ENCODE measurements at regions of chr3 and their contacts with region 1.

Region 1: DNA sequence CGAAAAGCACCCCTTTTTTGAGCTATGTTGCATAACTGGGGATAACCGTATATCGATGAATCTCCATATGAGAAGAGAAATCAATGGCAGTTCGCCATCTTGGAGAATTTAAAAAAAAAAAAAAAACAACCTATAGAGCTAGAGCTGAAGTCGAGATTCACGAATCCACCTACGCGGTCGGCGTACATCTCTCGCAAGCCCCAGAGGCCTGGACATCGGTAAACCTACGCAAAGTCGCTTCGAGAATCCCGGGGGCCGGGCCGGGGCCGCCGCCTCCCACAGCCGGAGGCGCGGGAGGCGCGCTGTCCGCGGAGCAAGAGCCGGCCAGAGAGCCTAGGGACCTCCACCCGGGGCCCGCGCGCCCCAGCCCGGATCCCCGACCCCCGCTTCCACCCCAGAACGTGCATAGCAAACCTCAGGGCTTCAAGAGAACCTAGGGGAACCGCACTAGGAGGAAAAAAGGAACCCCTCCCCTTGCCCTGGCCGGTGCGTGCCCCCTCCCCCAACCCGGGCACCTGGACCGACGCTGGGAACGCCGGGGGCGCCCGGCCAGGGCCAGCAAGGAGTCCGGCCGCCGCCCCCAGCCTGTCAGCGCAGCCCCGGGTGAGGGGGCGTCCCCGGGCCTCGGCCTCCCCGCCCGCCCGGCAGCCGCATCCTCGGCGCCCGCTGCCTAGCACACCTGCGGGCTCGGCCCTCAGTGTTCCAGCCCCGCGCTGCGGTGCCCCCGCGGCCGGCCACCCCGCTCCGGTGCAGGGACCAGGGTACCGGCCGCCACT is 567 bp downstream of the PFN2 start:
- DNase-seq: peak; percentile 66 to 90 (median 74)
- ATAC-seq: peak; percentile 55
- H3K4me3 ChIP-seq: peak overlapping the region; percentile 53
- H3K4me3 Mint-ChIP-seq: peak overlapping the region; percentile 94
- H3K27ac ChIP-seq: no peak overlapping the region
- H3K27ac Mint-ChIP-seq: peak overlapping the region; percentile 57
- H3K4me1 ChIP-seq: peaks cover 13% of the 10 kb centered on the region
- H3K4me1 Mint-ChIP-seq: peaks cover 27% of the 10 kb centered on the region
- H3K27me3 ChIP-seq: peaks cover 3 to 20% of the 10 kb centered on the region in 2 experiments
- H3K27me3 Mint-ChIP-seq: peaks cover 36% of the 10 kb centered on the region
- CTCF ChIP-seq: no peak

Region 2: GRCh38 chr3:149902498-149903139 is 67.5 kb before region 1 on chr3:
- CTCF ChIA-PET with region 1: no interaction called
- POLR2A ChIA-PET with region 1: no interaction called
- intact Hi-C with region 1: no loop called
- DNase-seq: no peak
- ATAC-seq: no peak
- H3K4me3 ChIP-seq: no peak overlapping the region
- H3K4me3 Mint-ChIP-seq: no peak overlapping the region
- H3K27ac ChIP-seq: no peak overlapping the region
- H3K27ac Mint-ChIP-seq: no peak overlapping the region
- H3K4me1 ChIP-seq: no peaks in the 10 kb centered on the region
- H3K4me1 Mint-ChIP-seq: peaks cover 5% of the 10 kb centered on the region
- H3K27me3 ChIP-seq: no peaks in the 10 kb centered on the region
- H3K27me3 Mint-ChIP-seq: no peaks in the 10 kb centered on the region
- CTCF ChIP-seq: peak; percentile 20

Region 3: GRCh38 chr3:150183678-150184425 is 213.7 kb after region 1 on chr3:
- CTCF ChIA-PET with region 1: interaction called, 11 read pairs
- POLR2A ChIA-PET with region 1: interaction called, 5 read pairs
- intact Hi-C with region 1: loop called (anchors 1 to 2 kb)
- DNase-seq: peak; percentile 6 to 71 (median 24)
- ATAC-seq: peak; percentile 75
- H3K4me3 ChIP-seq: peak overlapping the region; percentile 13
- H3K4me3 Mint-ChIP-seq: no peak overlapping the region
- H3K27ac ChIP-seq: no peak overlapping the region
- H3K27ac Mint-ChIP-seq: no peak overlapping the region
- H3K4me1 ChIP-seq: peaks cover 8% of the 10 kb centered on the region
- H3K4me1 Mint-ChIP-seq: no peaks in the 10 kb centered on the region
- H3K27me3 ChIP-seq: peaks cover 0 to 11% of the 10 kb centered on the region in 2 experiments
- H3K27me3 Mint-ChIP-seq: peaks cover 27% of the 10 kb centered on the region
- CTCF ChIP-seq: peak; percentile 47

Region 4: DNA sequence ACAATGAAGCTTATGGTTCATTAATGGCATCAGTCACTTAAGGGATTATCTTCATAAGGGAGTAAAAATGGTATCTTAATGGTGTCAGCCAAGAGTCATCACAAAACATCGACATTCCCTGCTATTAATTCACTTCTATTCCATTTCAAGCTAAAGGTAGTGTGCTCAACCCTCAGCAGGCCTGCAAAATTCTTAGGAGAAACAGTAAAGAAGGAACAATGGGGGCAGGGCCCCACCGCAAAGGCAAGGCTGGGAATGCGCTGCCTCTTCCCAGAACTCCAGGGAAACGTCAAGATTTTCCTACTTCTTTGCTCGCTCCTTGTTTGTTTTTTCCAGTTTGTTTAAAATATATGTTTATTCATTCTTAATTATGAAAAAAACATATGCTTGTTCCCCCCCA is 250.7 kb after region 1 on chr3:
- CTCF ChIA-PET with region 1: interaction called, 4 read pairs
- POLR2A ChIA-PET with region 1: interaction called, 4 read pairs
- intact Hi-C with region 1: loop called (anchors 1 to 2 kb)
- DNase-seq: no peak
- ATAC-seq: no peak
- H3K4me3 ChIP-seq: no peak overlapping the region
- H3K4me3 Mint-ChIP-seq: no peak overlapping the region
- H3K27ac ChIP-seq: no peak overlapping the region
- H3K27ac Mint-ChIP-seq: no peak overlapping the region
- H3K4me1 ChIP-seq: peaks cover 6% of the 10 kb centered on the region
- H3K4me1 Mint-ChIP-seq: peaks cover 8% of the 10 kb centered on the region
- H3K27me3 ChIP-seq: peaks cover 9 to 29% of the 10 kb centered on the region in 2 experiments
- H3K27me3 Mint-ChIP-seq: peaks cover 68% of the 10 kb centered on the region
- CTCF ChIP-seq: no peak

Region 5: DNA sequence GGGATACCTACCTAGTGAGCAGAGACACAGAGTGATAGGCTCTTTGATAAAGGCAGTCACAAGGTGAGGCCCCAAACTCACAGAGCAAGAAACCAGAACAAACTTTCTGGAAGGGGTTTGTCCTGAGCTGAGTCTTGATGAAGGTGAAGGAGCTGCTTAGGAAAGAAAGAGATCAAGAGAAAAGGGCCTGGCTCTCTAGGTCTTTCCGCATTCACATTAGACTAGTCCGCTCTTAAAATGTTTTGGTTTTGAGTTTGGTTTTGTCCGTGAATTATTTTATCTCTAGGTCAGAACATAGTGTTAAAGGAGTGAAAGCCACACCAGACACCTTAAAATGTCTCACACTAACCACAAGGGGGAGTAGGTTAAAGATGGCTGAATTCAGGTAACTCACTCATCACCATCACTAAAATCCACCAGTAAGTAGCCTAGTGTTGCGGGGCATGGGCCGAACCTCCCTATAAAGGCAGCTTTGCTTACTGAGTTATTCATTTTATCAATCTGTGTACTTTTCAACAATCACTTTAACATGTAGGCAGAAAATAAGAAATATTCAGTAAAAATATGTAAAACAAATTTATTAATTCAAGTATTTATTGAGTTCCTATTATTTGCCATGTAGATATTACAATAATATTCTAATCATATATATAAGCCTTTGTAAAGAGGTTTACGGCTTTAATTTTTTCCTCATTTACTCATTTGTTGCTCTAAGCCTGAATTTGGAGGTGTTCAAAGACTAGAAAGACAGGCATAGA is 316.4 kb after region 1 on chr3:
- CTCF ChIA-PET with region 1: interaction called, 3 read pairs
- POLR2A ChIA-PET with region 1: no interaction called
- intact Hi-C with region 1: loop called in 1 of 2 experiments (anchors 10 kb)
- DNase-seq: peak in 5 of 14 experiments; percentile 1 to 68 (median 59)
- ATAC-seq: peak; percentile 82
- H3K4me3 ChIP-seq: no peak overlapping the region
- H3K4me3 Mint-ChIP-seq: no peak overlapping the region
- H3K27ac ChIP-seq: no peak overlapping the region
- H3K27ac Mint-ChIP-seq: no peak overlapping the region
- H3K4me1 ChIP-seq: no peaks in the 10 kb centered on the region
- H3K4me1 Mint-ChIP-seq: no peaks in the 10 kb centered on the region
- H3K27me3 ChIP-seq: peaks cover 0 to 8% of the 10 kb centered on the region in 2 experiments
- H3K27me3 Mint-ChIP-seq: peaks cover 16% of the 10 kb centered on the region
- CTCF ChIP-seq: peak; percentile 65

Region 6: DNA sequence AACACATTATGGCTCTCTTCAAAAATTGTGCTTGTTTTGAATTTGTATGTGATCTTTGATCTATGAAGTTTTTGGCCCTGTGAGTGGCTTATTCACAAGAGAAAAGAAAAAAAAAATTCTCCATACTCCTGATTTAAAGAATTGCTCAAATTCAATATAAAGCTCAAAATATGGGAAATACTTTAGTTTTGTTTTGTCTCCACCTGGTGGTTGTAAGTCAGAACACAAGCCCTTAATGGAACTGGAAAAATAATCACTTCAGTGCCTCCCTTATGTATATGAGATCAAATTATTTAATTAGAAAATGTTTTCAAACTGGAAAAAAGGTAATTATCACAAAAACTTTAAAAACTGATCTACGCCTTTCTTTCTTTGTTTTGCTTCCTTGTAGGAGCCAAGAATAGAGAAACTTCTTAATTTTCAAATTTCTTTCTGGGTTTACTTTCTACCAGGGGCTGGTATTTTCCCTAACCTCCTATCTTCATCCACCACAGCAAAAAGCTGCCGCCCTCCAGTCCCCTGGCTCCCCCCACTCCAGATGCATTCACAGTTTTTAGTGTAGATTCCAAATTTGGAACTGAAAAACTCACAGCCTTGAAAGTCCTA is 525.5 kb after region 1 on chr3:
- CTCF ChIA-PET with region 1: interaction called, 4 read pairs
- POLR2A ChIA-PET with region 1: no interaction called
- intact Hi-C with region 1: loop called (anchors 1 to 5 kb)
- DNase-seq: peak in 5 of 14 experiments; percentile 3 to 74 (median 63)
- ATAC-seq: peak; percentile 64
- H3K4me3 ChIP-seq: no peak overlapping the region
- H3K4me3 Mint-ChIP-seq: no peak overlapping the region
- H3K27ac ChIP-seq: no peak overlapping the region
- H3K27ac Mint-ChIP-seq: no peak overlapping the region
- H3K4me1 ChIP-seq: no peaks in the 10 kb centered on the region
- H3K4me1 Mint-ChIP-seq: no peaks in the 10 kb centered on the region
- H3K27me3 ChIP-seq: no peaks in the 10 kb centered on the region
- H3K27me3 Mint-ChIP-seq: no peaks in the 10 kb centered on the region
- CTCF ChIP-seq: peak; percentile 85

Region 7: GRCh38 chr3:150546226-150547044 is 576.3 kb after region 1 on chr3 and contains the starts of genes EIF2A and SERP1:
- CTCF ChIA-PET with region 1: no interaction called
- POLR2A ChIA-PET with region 1: interaction called, 7 read pairs
- intact Hi-C with region 1: loop called in 1 of 2 experiments (anchors 5 kb)
- DNase-seq: peak; percentile 98 to 100 (median 99)
- ATAC-seq: peak; percentile 88
- H3K4me3 ChIP-seq: peak within 1 kb of the TSS; percentile 86
- H3K4me3 Mint-ChIP-seq: peak within 1 kb of the TSS; percentile 91
- H3K27ac ChIP-seq: peak within 1 kb of the TSS; percentile 98 to 99
- H3K27ac Mint-ChIP-seq: peak within 1 kb of the TSS; percentile 93
- H3K4me1 ChIP-seq: peaks cover 19% of the 10 kb centered on the region
- H3K4me1 Mint-ChIP-seq: peaks cover 73% of the 10 kb centered on the region
- H3K27me3 ChIP-seq: no peaks in the 10 kb centered on the region
- H3K27me3 Mint-ChIP-seq: no peaks in the 10 kb centered on the region
- CTCF ChIP-seq: no peak
- total RNA-seq, gene EIF2A: 115 to 122 TPM
- total RNA-seq, gene SERP1: 141 to 147 TPM